ENCODE measurements at regions of chr10 and their contacts with region 1.

Region 1: GRCh38 chr10:23376229-23376655 is 31.6 kb upstream of the C10orf67 start:
- DNase-seq: peak; percentile 47 to 95 (median 50)
- H3K4me3 ChIP-seq: no peak overlapping the region
- H3K4me3 Mint-ChIP-seq: no peak overlapping the region
- H3K27ac ChIP-seq: peak overlapping the region in 1 of 2 donors; percentile 55
- H3K27ac Mint-ChIP-seq: peak overlapping the region in 6 of 7 donors; percentile 60 to 80 (median 65)
- H3K4me1 ChIP-seq: peaks cover 15 to 28% of the 10 kb centered on the region in 2 donors
- H3K4me1 Mint-ChIP-seq: peaks cover 30% of the 10 kb centered on the region
- H3K27me3 ChIP-seq: peaks cover 0 to 5% of the 10 kb centered on the region in 2 donors
- H3K27me3 Mint-ChIP-seq: peaks cover 5 to 11% (median 7%) of the 10 kb centered on the region in 3 donors
- CTCF ChIP-seq: no peak

Region 2: GRCh38 chr10:23331567-23332290 is 44.5 kb before region 1 on chr10:
- intact Hi-C with region 1: loop called in 1 of 2 experiments (anchors 5 kb)
- DNase-seq: peak; percentile 49 to 80 (median 63)
- H3K4me3 ChIP-seq: no peak overlapping the region
- H3K4me3 Mint-ChIP-seq: no peak overlapping the region
- H3K27ac ChIP-seq: no peak overlapping the region
- H3K27ac Mint-ChIP-seq: peak overlapping the region in 2 of 7 donors; percentile 25 to 70
- H3K4me1 ChIP-seq: no peaks in the 10 kb centered on the region
- H3K4me1 Mint-ChIP-seq: no peaks in the 10 kb centered on the region
- H3K27me3 ChIP-seq: no peaks in the 10 kb centered on the region
- H3K27me3 Mint-ChIP-seq: peaks cover 10 to 16% (median 11%) of the 10 kb centered on the region in 3 donors
- CTCF ChIP-seq: no peak

Measured in CD14-positive monocyte (primary cell).